ENCODE measurements at regions of chr4 and their contacts with region 1.

Region 1: DNA sequence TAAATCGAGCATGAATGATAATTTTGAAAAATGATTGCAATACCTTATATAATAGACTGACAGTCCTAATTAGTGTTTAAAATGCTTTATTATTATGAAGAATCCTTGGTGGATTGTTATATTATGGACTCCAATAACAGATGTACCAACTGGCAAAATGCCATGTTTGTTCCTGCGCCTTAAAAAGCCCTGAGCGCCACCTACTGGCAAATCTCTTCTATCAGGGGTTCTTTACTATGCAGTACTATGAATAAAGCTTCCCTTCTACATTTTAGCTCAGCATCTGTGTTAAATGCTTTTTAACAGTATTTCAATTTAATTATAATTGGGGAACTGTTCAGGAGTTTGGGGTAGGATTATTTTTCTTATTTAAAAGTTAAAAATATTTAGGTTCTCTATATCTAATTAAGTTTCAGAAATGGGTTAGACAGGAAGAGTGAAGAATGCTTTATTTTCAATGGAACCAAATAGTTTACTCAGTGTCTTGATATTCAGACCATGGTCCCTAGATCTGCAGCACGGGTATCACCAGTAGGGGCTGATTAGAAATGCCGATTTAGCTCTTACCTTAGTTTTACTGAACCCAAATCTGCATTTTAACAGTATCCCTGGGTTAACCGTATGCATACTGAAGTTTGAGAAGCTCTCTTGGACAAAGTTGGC is 20.1 kb downstream of the CFAP97 start:
- DNase-seq: peak; percentile 37 to 90
- ATAC-seq: peak; percentile 50 to 90 (median 69)
- H3K4me3 ChIP-seq: no peak overlapping the region
- H3K27ac ChIP-seq: no peak overlapping the region
- H3K4me1 ChIP-seq: peaks cover 0 to 9% (median 0%) of the 10 kb centered on the region in 9 donors
- H3K27me3 ChIP-seq: no peaks in the 10 kb centered on the region
- CTCF ChIP-seq: peak; percentile 74 to 96 (median 88)

Region 2: DNA sequence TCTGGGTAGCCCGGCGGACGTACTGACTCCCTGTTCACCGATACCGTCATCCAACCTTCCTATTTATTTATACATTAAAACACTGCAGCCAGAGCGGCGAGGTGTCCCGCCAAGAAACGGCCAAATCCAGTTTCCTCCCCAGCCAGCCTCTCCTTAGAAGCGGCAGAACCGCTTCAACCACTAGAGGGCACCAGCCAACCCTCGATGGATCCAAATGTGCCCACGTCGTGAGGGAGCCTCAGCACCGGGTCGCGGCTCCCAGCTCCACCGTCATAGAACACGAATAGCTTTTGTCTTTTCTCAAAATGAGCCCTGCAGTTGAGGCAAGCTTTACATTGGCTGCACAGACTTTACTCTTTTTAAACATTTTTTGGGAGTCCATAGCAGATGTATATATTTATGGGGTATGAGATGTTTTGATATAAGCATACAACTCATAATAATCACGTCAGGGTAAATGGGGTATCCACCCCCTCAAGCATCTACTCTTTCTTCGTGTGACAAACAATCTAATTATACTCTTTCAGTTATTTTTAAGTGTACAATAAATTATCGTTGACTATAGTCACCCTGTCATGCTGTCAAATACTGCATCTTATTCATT is 178.4 kb before region 1 on chr4:
- intact Hi-C with region 1: loop called in 2 of 10 experiments (anchors 5 to 10 kb)
- DNase-seq: peak; percentile 81 to 83
- ATAC-seq: peak; percentile 88 to 96 (median 93)
- H3K4me3 ChIP-seq: peak overlapping the region in 9 of 10 donors; percentile 16 to 42 (median 35)
- H3K27ac ChIP-seq: peak overlapping the region in 2 of 10 donors; percentile 5
- H3K4me1 ChIP-seq: peaks cover 0 to 14% (median 11%) of the 10 kb centered on the region in 9 donors
- H3K27me3 ChIP-seq: peaks cover 0 to 49% (median 15%) of the 10 kb centered on the region in 7 donors
- CTCF ChIP-seq: peak; percentile 76 to 97 (median 95)

Region 3: GRCh38 chr4:185039508-185040273 is 144.1 kb before region 1 on chr4:
- intact Hi-C with region 1: loop called in 4 of 10 experiments (anchors 1 to 5 kb)
- DNase-seq: peak in 1 of 2 donors; percentile 59
- ATAC-seq: peak in 7 of 8 donors; percentile 46 to 86 (median 75)
- H3K4me3 ChIP-seq: peak overlapping the region in 2 of 10 donors; percentile 7 to 24
- H3K27ac ChIP-seq: no peak overlapping the region
- H3K4me1 ChIP-seq: peaks cover 0 to 11% (median 6%) of the 10 kb centered on the region in 9 donors
- H3K27me3 ChIP-seq: peaks cover 0 to 2% (median 0%) of the 10 kb centered on the region in 7 donors
- CTCF ChIP-seq: peak; percentile 62 to 89 (median 81)

Region 4: DNA sequence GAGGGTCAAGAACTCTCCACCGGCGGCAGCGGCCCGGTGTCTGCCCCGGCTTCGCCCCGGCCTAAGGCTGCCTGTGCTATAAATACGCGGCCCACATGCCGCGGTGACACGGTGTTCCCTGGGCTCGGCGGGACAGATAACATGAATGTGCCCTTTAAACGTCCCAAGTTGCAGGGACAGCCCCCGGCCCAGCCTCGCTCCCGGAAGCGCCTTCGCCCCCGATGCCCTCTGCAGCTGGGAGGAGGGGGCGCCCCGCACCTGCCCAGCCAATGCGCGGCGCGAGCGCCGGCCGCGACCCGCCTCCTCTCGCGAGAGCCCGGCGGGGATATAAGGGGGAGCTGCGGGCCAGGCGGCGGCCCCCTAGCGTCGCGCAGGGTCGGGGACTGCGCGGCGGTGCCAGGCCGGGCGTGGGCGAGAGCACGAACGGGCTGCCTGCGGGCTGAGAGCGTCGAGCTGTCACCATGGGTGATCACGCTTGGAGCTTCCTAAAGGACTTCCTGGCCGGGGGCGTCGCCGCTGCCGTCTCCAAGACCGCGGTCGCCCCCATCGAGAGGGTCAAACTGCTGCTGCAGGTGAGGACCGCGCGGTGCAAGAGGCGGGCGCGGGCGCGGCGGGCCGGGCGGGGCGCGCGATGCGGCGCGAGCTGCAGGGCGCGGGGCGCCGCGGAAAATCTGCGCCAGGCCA is 40.7 kb before region 1 on chr4 and contains the start of gene SLC25A4:
- intact Hi-C with region 1: loop called in 2 of 10 experiments (anchors 5 to 10 kb)
- DNase-seq: peak; percentile 87 to 92
- ATAC-seq: peak; percentile 85 to 93 (median 89)
- H3K4me3 ChIP-seq: peak within 1 kb of the TSS; percentile 36 to 80 (median 66)
- H3K27ac ChIP-seq: peak within 1 kb of the TSS; percentile 83 to 94 (median 92)
- H3K4me1 ChIP-seq: peaks cover 0 to 62% (median 20%) of the 10 kb centered on the region in 9 donors
- H3K27me3 ChIP-seq: peaks cover 0 to 45% (median 0%) of the 10 kb centered on the region in 7 donors
- CTCF ChIP-seq: peak; percentile 15 to 67 (median 51)
- total RNA-seq, gene SLC25A4: 1,282 to 2,916 (median 1,803) TPM